Activated CD4-positive, alpha-beta memory T cell treated with anti-CD3 and anti-CD28 coated beads for 36 hours (primary cell): ENCODE measurements at regions of chr11 and their contacts with region 1.

Region 1: DNA sequence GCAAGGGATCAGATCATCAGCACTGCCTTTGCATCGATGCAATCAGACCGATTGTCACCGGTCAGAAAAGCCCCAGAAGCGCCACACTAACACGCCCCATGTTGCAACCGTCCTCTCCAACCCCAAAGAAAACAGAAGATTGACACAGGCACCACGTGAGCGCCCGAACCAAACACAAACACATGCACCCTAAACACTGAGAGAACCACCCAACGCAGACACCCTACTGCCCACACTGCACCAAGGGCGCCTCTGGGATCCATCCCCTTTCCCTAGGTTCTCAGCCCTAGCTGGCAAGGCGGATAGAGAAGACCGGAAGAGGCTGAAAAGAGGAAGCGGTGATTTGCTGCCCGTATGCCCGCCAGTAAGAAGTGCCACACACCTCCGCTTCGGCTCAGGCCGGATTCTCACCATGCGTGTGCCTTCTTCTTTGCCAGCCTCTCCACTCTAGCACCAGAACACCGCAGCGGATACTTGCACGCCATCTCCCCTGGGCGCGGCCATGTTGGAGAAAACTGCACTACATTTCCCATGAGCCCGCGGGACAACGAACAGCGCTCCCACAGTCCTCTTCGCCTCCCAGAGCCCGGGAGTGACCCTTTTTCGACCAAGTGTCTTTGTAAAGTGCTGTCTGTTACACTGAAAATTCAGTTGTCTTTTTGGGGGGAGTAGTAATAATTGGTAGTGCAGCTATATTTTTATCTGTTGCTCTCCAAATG is at the start of gene ALKBH8:
- DNase-seq: peak; percentile 88
- H3K4me3 Mint-ChIP-seq: peak within 1 kb of the TSS; percentile 92
- H3K27ac Mint-ChIP-seq: peak within 1 kb of the TSS; percentile 94
- H3K4me1 Mint-ChIP-seq: peaks cover 45% of the 10 kb centered on the region
- H3K27me3 Mint-ChIP-seq: no peaks in the 10 kb centered on the region
- total RNA-seq, gene ALKBH8: 9.3 to 11.2 TPM

Region 2: DNA sequence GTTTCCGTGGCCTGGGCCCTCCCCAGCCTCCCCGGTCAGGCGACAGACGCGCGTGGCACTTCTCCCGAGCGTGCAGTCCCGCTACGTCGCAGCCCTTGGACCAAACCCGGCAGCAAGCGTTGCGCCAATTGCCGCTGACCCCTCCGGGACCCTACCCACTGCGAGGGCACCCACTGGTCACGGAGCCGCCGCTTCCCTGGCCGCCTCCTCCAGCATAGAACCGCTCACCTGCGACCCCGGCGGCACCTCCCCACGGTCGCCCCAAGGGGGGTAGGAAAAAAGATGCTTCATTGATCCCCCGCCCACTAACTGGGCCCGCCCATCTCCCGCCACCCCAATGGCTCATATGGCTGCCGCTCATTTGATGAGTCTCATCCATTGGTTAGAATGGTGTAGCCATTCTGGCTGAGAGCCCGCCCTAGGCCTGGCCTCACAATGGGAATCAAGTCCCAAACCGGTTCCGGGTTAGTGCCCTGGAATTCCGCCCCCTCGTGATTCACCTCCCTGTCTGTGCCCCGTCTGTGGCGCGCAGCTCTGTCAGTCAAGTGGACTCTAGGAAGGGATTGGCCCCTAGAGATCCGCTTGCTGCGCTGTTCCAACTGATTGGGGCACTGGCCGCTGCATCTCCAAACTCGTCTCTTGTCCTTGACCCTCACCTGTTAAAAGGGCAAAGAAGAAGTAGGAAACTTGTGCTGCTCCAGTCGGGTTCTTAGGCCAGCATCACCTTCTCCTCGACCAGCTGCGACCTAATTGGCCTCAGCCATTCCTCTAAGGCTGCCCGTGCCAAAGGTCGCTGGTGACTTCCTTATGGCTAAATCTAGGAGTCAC is 1543.2 kb before region 1 on chr11 and contains the start of gene MSANTD4:
- CTCF ChIA-PET with region 1: no interaction called
- POLR2A ChIA-PET with region 1: no interaction called
- intact Hi-C with region 1: loop called (anchors 5 kb)
- DNase-seq: peak; percentile 99
- H3K4me3 Mint-ChIP-seq: peak within 1 kb of the TSS; percentile 85
- H3K27ac Mint-ChIP-seq: peak within 1 kb of the TSS; percentile 87
- H3K4me1 Mint-ChIP-seq: peaks cover 40% of the 10 kb centered on the region
- H3K27me3 Mint-ChIP-seq: peaks cover 3% of the 10 kb centered on the region
- total RNA-seq, gene MSANTD4: 11.4 to 13.1 TPM

Region 3: GRCh38 chr11:107457558-107458271 is 107.7 kb before region 1 on chr11 and contains the start of gene CWF19L2:
- CTCF ChIA-PET with region 1: no interaction called
- POLR2A ChIA-PET with region 1: interaction called, 4 read pairs
- intact Hi-C with region 1: loop called (anchors 1 kb)
- DNase-seq: peak; percentile 94
- H3K4me3 Mint-ChIP-seq: peak within 1 kb of the TSS; percentile 89
- H3K27ac Mint-ChIP-seq: peak within 1 kb of the TSS; percentile 77
- H3K4me1 Mint-ChIP-seq: peaks cover 23% of the 10 kb centered on the region
- H3K27me3 Mint-ChIP-seq: no peaks in the 10 kb centered on the region
- total RNA-seq, gene CWF19L2: 14.0 to 14.4 TPM

Region 4: GRCh38 chr11:107590460-107591377 is 25.3 kb after region 1 on chr11 and contains the start of gene ELMOD1:
- CTCF ChIA-PET with region 1: interaction called, 4 read pairs
- POLR2A ChIA-PET with region 1: interaction called, 4 read pairs
- intact Hi-C with region 1: loop called (anchors 1 kb)
- DNase-seq: peak; percentile 59
- H3K4me3 Mint-ChIP-seq: peak within 1 kb of the TSS; percentile 76
- H3K27ac Mint-ChIP-seq: no peak within 1 kb of the TSS
- H3K4me1 Mint-ChIP-seq: peaks cover 26% of the 10 kb centered on the region
- H3K27me3 Mint-ChIP-seq: peaks cover 77% of the 10 kb centered on the region
- total RNA-seq, gene ELMOD1: 0.12 TPM in 1 of 2 experiments, not detected in the other

Region 5: GRCh38 chr11:107770551-107770951 is 205.2 kb after region 1 on chr11:
- CTCF ChIA-PET with region 1: interaction called, 12 read pairs
- POLR2A ChIA-PET with region 1: no interaction called
- intact Hi-C with region 1: loop called (anchors 1 kb)
- DNase-seq: peak; percentile 24
- H3K4me3 Mint-ChIP-seq: no peak overlapping the region
- H3K27ac Mint-ChIP-seq: peak overlapping the region; percentile 35
- H3K4me1 Mint-ChIP-seq: peaks cover 25% of the 10 kb centered on the region
- H3K27me3 Mint-ChIP-seq: peaks cover 13% of the 10 kb centered on the region

Region 6: GRCh38 chr11:107840129-107840484 is 274.7 kb after region 1 on chr11:
- CTCF ChIA-PET with region 1: no interaction called
- POLR2A ChIA-PET with region 1: no interaction called
- intact Hi-C with region 1: loop called (anchors 1 kb)
- DNase-seq: no peak
- H3K4me3 Mint-ChIP-seq: peak overlapping the region; percentile 53
- H3K27ac Mint-ChIP-seq: peak overlapping the region; percentile 98
- H3K4me1 Mint-ChIP-seq: peaks cover 71% of the 10 kb centered on the region
- H3K27me3 Mint-ChIP-seq: no peaks in the 10 kb centered on the region

Region 7: GRCh38 chr11:108008656-108009496 is 443.5 kb after region 1 on chr11 and contains the start of gene CUL5:
- CTCF ChIA-PET with region 1: interaction called, 4 read pairs
- POLR2A ChIA-PET with region 1: no interaction called
- intact Hi-C with region 1: loop called (anchors 5 kb)
- DNase-seq: peak; percentile 94
- H3K4me3 Mint-ChIP-seq: peak within 1 kb of the TSS; percentile 93
- H3K27ac Mint-ChIP-seq: peak within 1 kb of the TSS; percentile 93
- H3K4me1 Mint-ChIP-seq: peaks cover 17% of the 10 kb centered on the region
- H3K27me3 Mint-ChIP-seq: no peaks in the 10 kb centered on the region
- total RNA-seq, gene CUL5: 27.7 to 30.7 TPM